Dorsolateral prefrontal cortex (tissue), 120 donors: ENCODE measurements at regions of chr15 and their contacts with region 1.

Region 1: GRCh38 chr15:88834211-88834812 is 31.1 kb downstream of the ACAN start:
- DNase-seq: peak; percentile 12 to 73 (median 58)
- H3K4me3 ChIP-seq: peak overlapping the region in 1 of 59 donors; percentile 27
- H3K27ac ChIP-seq: peak overlapping the region in 3 of 59 donors; percentile 21 to 79 (median 51)
- H3K27me3 ChIP-seq: no peaks in the 10 kb centered on the region
- CTCF ChIP-seq: peak; percentile 18 to 86 (median 71)

Region 2: GRCh38 chr15:88476635-88477060 is 357.7 kb before region 1 on chr15:
- intact Hi-C with region 1: loop called (anchors 2 to 5 kb)
- DNase-seq: peak in 4 of 10 donors; percentile 43 to 72 (median 50)
- H3K4me3 ChIP-seq: peak overlapping the region in 9 of 59 donors; percentile 1 to 23 (median 9)
- H3K27ac ChIP-seq: peak overlapping the region in 55 of 59 donors; percentile 35 to 87 (median 72)
- H3K27me3 ChIP-seq: no peaks in the 10 kb centered on the region
- CTCF ChIP-seq: peak; percentile 55 to 87 (median 74)

Region 3: GRCh38 chr15:88657326-88658069 is 176.8 kb before region 1 on chr15:
- intact Hi-C with region 1: loop called (anchors 2 kb)
- DNase-seq: peak in 3 of 10 donors; percentile 45 to 70 (median 58)
- H3K4me3 ChIP-seq: no peak overlapping the region
- H3K27ac ChIP-seq: peak overlapping the region in 5 of 59 donors; percentile 15 to 48 (median 24)
- H3K27me3 ChIP-seq: no peaks in the 10 kb centered on the region
- CTCF ChIP-seq: peak; percentile 41 to 87 (median 77)

Region 4: GRCh38 chr15:88681610-88682221 is 152.6 kb before region 1 on chr15:
- intact Hi-C with region 1: loop called in 1 of 2 experiments (anchors 5 kb)
- DNase-seq: peak in 9 of 10 donors; percentile 55 to 83 (median 65)
- H3K4me3 ChIP-seq: peak overlapping the region in 3 of 59 donors; percentile 4 to 38 (median 24)
- H3K27ac ChIP-seq: peak overlapping the region in 57 of 59 donors; percentile 21 to 91 (median 75)
- H3K27me3 ChIP-seq: no peaks in the 10 kb centered on the region
- CTCF ChIP-seq: peak in 2 of 56 donors; percentile 7 to 8

Region 5: DNA sequence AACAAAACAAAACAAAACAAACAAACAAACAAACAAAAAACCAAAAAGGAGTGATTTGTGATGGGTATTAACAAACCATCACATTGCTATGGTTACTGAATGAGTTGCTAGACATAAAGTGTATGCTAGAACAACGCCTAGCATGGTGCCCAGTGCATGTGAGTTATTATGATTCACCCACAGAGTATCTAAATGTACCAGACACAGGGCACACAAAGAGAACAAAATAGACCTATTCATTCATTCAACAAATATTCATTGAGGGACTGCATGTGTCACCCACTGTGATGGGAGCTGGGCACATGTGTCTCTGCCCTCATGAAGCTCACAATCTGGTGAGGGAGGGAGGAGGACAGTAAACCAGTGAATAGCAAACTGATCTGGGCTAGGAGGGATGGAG is 42.7 kb before region 1 on chr15:
- intact Hi-C with region 1: no loop called
- DNase-seq: no peak
- H3K4me3 ChIP-seq: no peak overlapping the region
- H3K27ac ChIP-seq: no peak overlapping the region
- H3K27me3 ChIP-seq: peaks cover 0 to 39% (median 14%) of the 10 kb centered on the region in 45 donors
- CTCF ChIP-seq: no peak

Region 6: DNA sequence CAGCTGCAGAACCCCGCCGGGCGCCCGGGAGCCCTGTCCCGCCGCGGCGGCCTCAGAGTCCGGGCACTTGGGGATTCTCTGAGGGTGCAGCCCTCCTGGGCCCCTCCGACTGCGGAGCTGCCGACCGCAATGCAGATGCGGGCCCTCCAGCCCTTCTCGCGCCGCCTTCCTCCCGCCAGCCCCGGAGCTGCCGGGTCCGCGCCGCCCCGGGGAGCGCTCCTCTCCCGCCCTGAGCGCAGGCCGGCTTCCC is 31.4 kb before region 1 on chr15:
- intact Hi-C with region 1: no loop called
- DNase-seq: no peak
- H3K4me3 ChIP-seq: peak overlapping the region in 58 of 59 donors; percentile 15 to 66 (median 50)
- H3K27ac ChIP-seq: no peak overlapping the region
- H3K27me3 ChIP-seq: peaks cover 4 to 79% (median 41%) of the 10 kb centered on the region in 45 donors
- CTCF ChIP-seq: no peak